Right ventricle myocardium superior (tissue), 1 donor: ENCODE measurements at regions of chr4 and their contacts with region 1.

Region 1: GRCh38 chr4:104693599-104694201 is 199.0 kb upstream of the CXXC4 start:
- DNase-seq: no peak
- ATAC-seq: no peak

Region 2: DNA sequence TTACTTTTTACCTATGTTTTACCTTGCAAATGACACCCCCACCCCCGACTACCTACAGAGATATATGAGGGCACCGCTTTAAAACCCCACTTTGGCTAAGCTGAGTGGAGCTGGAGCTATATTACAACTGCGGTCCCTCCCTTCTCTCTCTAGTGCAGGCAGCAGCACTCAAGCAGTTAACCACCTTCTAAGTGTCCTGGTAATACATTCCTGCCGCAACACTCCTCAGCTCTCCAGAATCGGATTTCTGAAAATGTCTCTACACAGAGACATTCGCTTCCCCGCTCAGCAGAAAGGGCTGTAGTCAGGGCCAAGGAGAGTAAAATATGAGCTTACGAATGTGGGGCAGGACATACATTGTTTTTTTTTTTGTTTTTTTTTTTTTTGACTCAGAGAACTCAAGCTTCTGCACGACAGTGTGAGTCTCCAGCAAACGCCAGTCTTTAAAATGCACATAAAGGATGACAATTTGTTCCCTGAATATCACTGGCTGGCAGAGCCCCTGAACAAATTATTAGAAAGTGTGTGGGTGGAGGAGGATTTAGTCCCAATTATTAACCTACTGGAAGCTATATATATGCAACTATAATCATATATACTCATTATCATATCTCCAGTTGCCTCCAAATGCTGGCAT is 166.0 kb after region 1 on chr4:
- intact Hi-C with region 1: loop called (anchors 5 kb)
- DNase-seq: no peak
- ATAC-seq: peak; percentile 82

Region 3: DNA sequence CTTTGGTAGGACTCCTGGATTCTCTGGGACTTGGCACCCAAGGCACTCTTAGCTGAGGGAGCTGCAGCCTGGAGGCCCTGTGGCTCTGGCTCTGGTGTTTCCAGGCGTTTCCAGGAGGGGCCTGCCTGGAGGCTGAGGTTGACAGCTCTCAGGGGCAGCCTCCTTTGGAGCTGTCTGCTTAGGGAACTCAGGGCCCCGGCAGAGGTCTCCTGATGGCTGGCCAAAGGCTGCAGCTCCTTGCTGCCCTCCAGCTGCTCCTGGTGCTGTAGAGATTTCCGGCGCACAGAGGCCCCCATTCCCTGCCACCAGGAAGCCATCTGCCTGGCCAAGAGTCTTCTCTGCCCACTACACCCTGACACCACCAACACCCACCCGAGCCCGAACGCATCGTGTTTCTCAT is 833.4 kb after region 1 on chr4:
- intact Hi-C with region 1: no loop called
- DNase-seq: no peak
- ATAC-seq: no peak